ENCODE measurements at regions of chr4 and their contacts with region 1.

Region 1: DNA sequence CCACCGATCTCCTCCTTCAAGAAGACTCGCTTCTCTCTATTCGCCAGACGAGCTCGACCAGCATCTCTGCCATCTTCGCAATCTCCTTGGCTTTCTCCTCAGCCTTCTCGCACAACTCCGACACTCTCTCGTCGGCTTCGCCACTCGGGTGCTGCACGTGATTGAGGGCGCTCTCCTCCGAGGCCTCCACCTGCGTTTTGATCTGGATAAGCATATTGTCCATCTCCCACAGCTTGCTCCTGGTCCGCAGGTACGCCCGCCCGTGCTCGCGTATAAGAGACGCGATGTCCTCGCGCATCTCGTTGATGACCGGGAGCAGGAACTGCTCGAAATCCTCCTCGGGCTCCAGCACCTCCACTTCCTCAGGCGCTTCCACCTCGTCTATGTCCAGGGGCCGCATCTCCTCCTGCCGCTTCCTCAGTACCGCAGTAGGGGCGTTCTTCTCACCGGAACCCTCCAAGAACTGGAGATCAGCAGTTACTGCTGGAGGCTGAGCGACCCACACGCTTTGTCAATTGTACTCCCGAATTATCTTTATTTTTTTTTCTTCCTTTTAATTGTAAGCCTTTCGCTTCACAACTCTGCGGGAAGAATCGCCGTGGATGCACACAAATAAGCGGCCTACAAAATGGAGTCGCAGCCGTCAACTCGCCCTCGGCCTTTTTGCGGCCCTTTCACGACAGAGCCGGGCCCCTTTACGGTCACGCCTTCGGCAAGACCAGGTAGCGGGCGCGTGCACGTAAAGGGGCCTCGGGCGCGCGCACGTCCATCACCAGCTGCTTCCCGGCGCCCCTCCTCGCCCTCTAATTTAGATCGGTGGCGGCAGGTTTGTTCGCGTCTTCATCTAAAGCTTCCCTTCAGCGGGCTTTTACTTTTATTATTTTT is at the start of gene MRFAP1L1:
- H3K4me3 Mint-ChIP-seq: peak within 1 kb of the TSS; percentile 99
- H3K27ac Mint-ChIP-seq: peak within 1 kb of the TSS; percentile 91
- H3K4me1 Mint-ChIP-seq: peaks cover 61% of the 10 kb centered on the region
- H3K27me3 Mint-ChIP-seq: no peaks in the 10 kb centered on the region

Region 2: DNA sequence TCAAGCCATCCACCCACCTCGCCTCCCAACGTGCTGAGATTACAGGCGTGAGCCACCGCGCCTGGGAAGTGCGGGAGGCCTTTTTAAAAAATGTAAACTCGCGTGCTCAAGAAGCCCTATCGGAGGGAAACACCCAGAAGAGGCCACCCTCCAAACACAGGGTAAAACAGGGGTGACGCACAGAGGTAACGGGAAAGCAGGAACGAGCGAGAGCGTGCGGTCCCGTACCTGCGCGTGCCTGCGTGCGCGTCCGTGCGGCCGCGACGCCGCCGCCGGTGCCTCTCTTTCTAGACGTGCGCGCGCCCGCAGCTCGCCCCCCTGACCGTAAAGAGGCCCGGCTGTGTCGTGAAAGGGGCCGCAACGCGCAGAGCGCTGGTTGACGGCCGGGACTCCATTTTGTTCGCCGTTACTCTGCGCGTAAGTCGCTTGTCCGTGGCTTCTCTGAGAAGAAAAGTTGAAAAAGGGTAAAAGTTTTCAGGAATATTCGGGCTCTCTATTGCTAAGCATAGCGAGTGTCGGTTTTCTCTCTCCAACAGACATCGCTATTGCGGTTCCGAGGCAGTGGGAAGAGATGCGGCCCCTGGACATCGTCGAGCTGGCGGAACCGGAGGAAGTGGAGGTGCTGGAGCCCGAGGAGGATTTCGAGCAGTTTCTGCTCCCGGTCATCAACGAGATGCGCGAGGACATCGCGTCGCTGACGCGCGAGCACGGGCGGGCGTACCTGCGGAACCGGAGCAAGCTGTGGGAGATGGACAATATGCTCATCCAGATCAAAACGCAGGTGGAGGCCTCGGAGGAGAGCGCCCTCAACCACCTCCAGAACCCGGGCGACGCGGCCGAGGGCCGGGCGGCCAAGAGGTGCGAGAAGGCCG is 68.9 kb before region 1 on chr4 and contains the start of gene MRFAP1:
- intact Hi-C with region 1: loop called (anchors 1 kb)
- H3K4me3 Mint-ChIP-seq: peak within 1 kb of the TSS; percentile 98
- H3K27ac Mint-ChIP-seq: peak within 1 kb of the TSS; percentile 97
- H3K4me1 Mint-ChIP-seq: peaks cover 36% of the 10 kb centered on the region
- H3K27me3 Mint-ChIP-seq: no peaks in the 10 kb centered on the region

Region 3: DNA sequence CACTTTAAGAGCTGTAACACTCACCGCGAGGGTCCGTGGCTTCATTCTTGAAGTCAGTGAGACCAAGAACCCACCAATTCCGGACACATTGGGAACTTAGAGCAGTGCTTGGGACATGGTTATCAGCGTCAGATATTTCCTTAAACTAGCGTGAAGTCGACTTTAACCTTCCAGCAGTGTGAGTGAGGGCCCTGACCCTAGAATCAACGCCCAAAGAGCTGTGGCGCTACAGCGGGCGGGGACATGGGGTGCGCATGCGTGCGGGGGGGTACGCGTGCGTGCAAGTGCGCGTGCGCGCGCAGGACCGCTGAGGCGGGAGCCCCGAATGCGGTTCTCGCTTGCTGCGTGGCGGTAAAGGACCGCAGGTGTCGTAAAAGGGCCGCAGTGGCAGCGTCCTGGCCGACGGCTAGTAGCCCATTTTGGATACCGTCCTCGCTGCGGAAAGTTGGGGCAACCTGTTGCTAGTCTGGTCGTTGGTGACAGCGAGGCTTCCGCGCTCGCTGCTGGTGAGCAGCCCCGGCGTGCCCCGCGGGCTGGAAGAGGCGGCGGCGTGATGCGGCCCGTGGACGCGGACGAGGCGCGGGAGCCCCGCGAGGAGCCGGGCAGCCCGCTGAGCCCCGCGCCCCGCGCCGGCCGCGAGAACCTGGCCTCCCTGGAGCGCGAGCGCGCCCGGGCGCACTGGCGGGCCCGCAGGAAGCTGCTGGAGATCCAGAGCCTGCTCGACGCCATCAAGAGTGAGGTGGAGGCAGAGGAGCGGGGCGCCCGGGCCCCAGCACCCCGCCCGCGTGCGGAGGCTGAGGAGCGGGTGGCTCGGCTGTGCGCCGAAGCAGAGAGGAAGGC is 35.6 kb before region 1 on chr4:
- intact Hi-C with region 1: loop called (anchors 5 kb)
- H3K4me3 Mint-ChIP-seq: peak overlapping the region; percentile 92
- H3K27ac Mint-ChIP-seq: peak overlapping the region; percentile 97
- H3K4me1 Mint-ChIP-seq: peaks cover 45% of the 10 kb centered on the region
- H3K27me3 Mint-ChIP-seq: no peaks in the 10 kb centered on the region

Region 4: DNA sequence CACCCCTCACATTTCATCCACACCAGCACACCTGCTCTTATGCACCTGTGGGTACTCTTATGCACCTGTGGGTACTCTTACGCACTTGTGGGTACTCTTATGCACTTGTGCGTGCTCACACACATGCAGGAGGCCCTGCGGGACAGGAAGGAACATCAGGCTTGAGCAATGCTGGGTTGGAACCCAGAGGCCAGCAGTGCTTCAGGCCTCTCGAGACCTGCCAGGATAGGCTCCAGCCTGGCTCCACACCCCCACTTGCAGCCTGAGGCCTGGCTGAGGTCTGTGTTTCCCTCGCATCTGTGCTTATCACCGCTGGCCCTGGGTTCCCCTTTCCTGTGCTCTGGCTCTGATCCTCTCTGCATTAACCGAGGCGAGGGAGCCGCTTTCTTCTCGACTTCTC is 517.5 kb after region 1 on chr4:
- intact Hi-C with region 1: no loop called
- H3K4me3 Mint-ChIP-seq: no peak overlapping the region
- H3K27ac Mint-ChIP-seq: no peak overlapping the region
- H3K4me1 Mint-ChIP-seq: no peaks in the 10 kb centered on the region
- H3K27me3 Mint-ChIP-seq: peaks cover 2% of the 10 kb centered on the region

Measured in dendritic cell treated with granulocyte-macrophage colony-stimulating factor and Interleukin-4, amounts not matched to agents 40 ng/mL and 50 ng/mL, for 4 days (primary cell).